A673 (cell line): ENCODE measurements at regions of chr12 and their contacts with region 1.

Region 1: GRCh38 chr12:14257734-14258574 is 107.5 kb upstream of the ATF7IP start:
- DNase-seq: peak; percentile 98
- H3K4me3 ChIP-seq: no peak overlapping the region
- H3K27ac ChIP-seq: peak overlapping the region; percentile 96
- H3K4me1 ChIP-seq: peaks cover 48% of the 10 kb centered on the region
- H3K27me3 ChIP-seq: no peaks in the 10 kb centered on the region
- CTCF ChIP-seq: no peak

Region 2: DNA sequence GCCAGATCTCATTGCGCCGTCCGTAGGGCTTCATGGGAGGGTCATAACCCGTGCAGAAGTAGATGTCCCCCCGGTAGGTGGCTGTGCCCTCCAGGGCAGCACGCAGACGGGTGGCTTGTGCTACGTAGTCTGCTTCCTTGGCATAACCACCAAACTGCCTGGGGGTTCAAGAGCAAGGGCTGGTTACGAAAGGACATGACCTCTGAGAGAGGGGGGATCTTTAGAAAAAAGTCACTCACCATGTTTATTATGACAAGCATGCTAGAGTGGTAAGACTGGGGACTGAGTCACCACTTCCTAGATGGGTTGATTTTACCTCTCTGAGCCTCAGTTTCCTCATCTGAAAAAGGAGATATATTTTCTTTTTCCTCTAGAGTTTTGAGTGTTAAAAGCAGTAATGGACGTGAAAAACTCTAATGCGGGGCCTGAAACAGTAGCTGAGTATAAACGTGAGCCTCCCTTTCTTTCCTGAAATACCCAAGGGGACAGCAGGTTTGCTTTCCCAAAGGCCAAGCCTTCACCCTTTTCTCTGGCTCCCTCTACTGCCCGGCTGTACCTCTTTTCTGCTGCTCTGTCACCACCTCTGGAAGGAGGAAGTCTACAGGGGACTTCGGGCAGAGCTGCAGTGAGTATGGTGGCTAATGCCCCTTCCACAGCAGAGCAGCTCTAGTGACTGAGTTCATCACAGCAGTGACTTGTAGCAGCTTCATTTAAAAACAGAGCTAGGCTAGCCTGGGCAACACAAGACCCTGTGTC is 1282.5 kb before region 1 on chr12:
- CTCF ChIA-PET with region 1: no interaction called
- POLR2A ChIA-PET with region 1: no interaction called
- intact Hi-C with region 1: no loop called
- DNase-seq: peak; percentile 21
- H3K4me3 ChIP-seq: no peak overlapping the region
- H3K27ac ChIP-seq: no peak overlapping the region
- H3K4me1 ChIP-seq: no peaks in the 10 kb centered on the region
- H3K27me3 ChIP-seq: no peaks in the 10 kb centered on the region
- CTCF ChIP-seq: peak; percentile 43; the same call in 1 of the 2 replicates

Region 3: GRCh38 chr12:14365294-14366208 is 107.6 kb after region 1 on chr12 and contains the start of gene ATF7IP:
- CTCF ChIA-PET with region 1: interaction called, 3 read pairs
- POLR2A ChIA-PET with region 1: interaction called, 6 read pairs
- intact Hi-C with region 1: loop called (anchors 1 kb)
- DNase-seq: peak; percentile 99
- H3K4me3 ChIP-seq: peak within 1 kb of the TSS; percentile 50
- H3K27ac ChIP-seq: peak within 1 kb of the TSS; percentile 94
- H3K4me1 ChIP-seq: peaks cover 4% of the 10 kb centered on the region
- H3K27me3 ChIP-seq: no peaks in the 10 kb centered on the region
- CTCF ChIP-seq: peak; percentile 48
- total RNA-seq, gene ATF7IP: 98.3 and 100 TPM in 2 replicates

Region 4: GRCh38 chr12:14384783-14385638 is 127.1 kb after region 1 on chr12:
- CTCF ChIA-PET with region 1: no interaction called
- POLR2A ChIA-PET with region 1: interaction called, 7 read pairs
- intact Hi-C with region 1: loop called (anchors 1 kb)
- DNase-seq: peak; percentile 93
- H3K4me3 ChIP-seq: peak overlapping the region; percentile 18
- H3K27ac ChIP-seq: peak overlapping the region; percentile 85
- H3K4me1 ChIP-seq: peaks cover 24% of the 10 kb centered on the region
- H3K27me3 ChIP-seq: no peaks in the 10 kb centered on the region
- CTCF ChIP-seq: no peak

Region 5: DNA sequence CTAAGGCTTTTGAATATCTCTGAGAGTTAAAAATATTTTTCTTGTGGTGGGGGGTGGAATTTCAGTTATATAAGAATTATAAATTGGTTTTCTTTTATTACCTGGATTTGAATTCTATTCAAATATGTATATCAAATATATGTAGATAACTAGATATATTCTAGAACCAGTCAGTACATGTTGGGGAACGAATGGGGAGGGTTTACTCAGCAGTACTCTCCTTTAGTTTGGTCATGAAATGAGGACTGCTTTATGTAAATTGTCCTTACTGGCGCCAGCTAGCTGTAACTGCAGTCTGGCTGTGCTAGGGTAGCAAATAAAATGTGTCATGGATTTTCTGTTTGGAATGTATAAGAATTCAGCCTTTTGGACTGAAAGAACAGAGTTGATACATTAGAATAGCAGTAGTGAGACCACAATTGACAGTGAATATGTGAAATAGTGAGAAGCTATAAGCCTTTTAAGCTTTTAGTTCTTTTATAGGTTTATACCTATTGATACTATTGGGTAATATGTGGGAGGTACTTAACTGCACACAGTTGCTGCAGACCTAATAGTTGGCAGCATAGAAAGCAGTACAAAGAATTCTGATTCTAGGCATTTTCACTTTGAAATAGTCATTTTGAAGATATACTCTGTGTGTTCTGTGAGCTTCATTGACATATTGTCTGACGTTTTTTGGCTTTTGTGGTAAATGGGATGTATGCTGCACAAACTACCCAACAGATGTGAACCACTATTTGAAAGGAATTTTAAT is 136.5 kb after region 1 on chr12:
- CTCF ChIA-PET with region 1: no interaction called
- POLR2A ChIA-PET with region 1: no interaction called
- intact Hi-C with region 1: loop called (anchors 2 kb)
- DNase-seq: peak; percentile 93
- H3K4me3 ChIP-seq: peak overlapping the region; percentile 31
- H3K27ac ChIP-seq: peak overlapping the region; percentile 81
- H3K4me1 ChIP-seq: peaks cover 67% of the 10 kb centered on the region
- H3K27me3 ChIP-seq: no peaks in the 10 kb centered on the region
- CTCF ChIP-seq: no peak; the same call in 1 of the 2 replicates

Region 6: GRCh38 chr12:14417715-14418114 is 159.8 kb after region 1 on chr12:
- CTCF ChIA-PET with region 1: no interaction called
- POLR2A ChIA-PET with region 1: no interaction called
- intact Hi-C with region 1: loop called (anchors 1 kb)
- DNase-seq: peak; percentile 90
- H3K4me3 ChIP-seq: peak overlapping the region; percentile 34
- H3K27ac ChIP-seq: peak overlapping the region; percentile 78
- H3K4me1 ChIP-seq: peaks cover 50% of the 10 kb centered on the region
- H3K27me3 ChIP-seq: no peaks in the 10 kb centered on the region
- CTCF ChIP-seq: no peak